ENCODE measurements at regions of chr6 and their contacts with region 1.

Region 1: DNA sequence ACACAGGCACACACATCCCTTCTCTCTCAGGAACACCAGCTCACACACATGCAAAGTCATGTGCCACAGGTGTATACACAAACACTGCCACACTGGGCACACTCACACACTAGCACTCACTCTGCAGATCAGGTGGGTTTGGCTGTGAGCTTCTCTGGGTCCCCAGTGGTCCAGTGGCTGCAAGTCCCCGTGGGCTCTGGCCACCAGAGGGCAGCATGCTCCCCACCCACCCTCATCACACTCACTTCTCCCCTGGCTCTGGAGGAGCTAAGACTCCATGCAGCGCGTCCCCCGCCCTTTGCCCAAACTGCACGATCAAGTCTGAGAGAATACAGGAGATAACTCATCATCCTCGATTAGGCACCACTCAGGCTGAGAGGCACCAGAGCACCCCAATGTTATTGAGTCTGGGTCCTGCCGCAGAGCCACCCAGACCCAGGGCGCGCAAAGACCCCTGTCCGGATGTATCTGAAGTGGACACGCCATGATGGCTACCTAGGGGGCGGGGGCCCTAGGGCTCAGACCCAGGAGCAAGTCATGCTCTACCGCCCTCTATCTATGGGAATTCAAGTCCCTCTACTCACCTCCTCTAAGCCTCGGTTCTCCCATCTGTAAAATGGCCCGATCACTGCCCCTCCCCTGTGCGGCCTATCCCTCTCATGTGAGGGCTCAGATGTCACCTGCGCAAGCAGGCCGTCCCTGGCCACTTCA is 90.5 kb downstream of the GRM4 start:
- DNase-seq: peak; percentile 92
- H3K4me3 ChIP-seq: no peak overlapping the region; a peak in 1 of 4 replicates
- H3K27ac ChIP-seq: no peak overlapping the region
- H3K4me1 ChIP-seq: peaks cover 0 to 10% of the 10 kb centered on the region in 2 experiments; a peak in 1 of 4 replicates
- H3K27me3 ChIP-seq: no peaks in the 10 kb centered on the region; the same call in none of the 2 replicates
- CTCF ChIP-seq: peak; percentile 84
- EP300 ChIP-seq: no peak
- RAD21 ChIP-seq: peak; percentile 73

Region 2: GRCh38 chr6:33994472-33995308 is 60.7 kb before region 1 on chr6:
- CTCF ChIA-PET with region 1: no interaction called
- POLR2A ChIA-PET with region 1: no interaction called
- DNase-seq: no peak
- H3K4me3 ChIP-seq: no peak overlapping the region
- H3K27ac ChIP-seq: no peak overlapping the region
- H3K4me1 ChIP-seq: no peaks in the 10 kb centered on the region; a peak in 2 of 4 replicates
- H3K27me3 ChIP-seq: 0 out of 2 replicates have a peak, but pooled peaks cover 5% of the 10 kb centered on the region
- CTCF ChIP-seq: no peak
- EP300 ChIP-seq: no peak
- RAD21 ChIP-seq: no peak

Region 3: DNA sequence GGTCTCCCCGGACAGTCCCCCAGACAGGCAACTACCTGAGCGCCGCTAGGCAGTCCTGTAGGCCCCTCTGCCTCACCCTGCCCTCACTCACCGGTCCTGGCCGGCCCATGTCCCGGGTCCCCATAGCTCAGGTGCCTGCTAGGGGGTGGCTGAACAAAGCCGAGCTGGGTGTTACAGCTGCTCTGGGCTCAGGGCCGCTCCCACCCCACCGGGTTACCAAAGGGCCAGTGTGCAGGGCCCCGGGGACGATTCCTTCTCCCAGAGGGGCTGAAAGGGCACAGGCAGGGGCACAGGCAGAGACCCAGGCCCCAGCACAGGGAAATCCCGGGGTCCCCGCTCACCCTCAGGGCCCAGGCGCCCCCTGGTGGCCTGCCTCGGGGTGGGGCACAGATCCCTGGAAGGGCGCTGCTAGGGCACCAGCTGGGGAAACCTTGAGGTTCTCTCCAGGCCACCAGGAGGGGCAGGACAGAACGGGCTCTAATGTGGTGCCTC is 27.9 kb before region 1 on chr6:
- CTCF ChIA-PET with region 1: interaction called, 53 read pairs
- POLR2A ChIA-PET with region 1: no interaction called
- DNase-seq: peak; percentile 88
- H3K4me3 ChIP-seq: no peak overlapping the region
- H3K27ac ChIP-seq: no peak overlapping the region
- H3K4me1 ChIP-seq: peaks cover 0 to 21% of the 10 kb centered on the region in 2 experiments; a peak in 1 of 4 replicates
- H3K27me3 ChIP-seq: no peaks in the 10 kb centered on the region; the same call in 1 of the 2 replicates
- CTCF ChIP-seq: peak; percentile 77
- EP300 ChIP-seq: no peak
- RAD21 ChIP-seq: peak; percentile 70

Region 4: GRCh38 chr6:34067814-34068213 is 12.4 kb after region 1 on chr6:
- CTCF ChIA-PET with region 1: interaction called, 38 read pairs
- POLR2A ChIA-PET with region 1: interaction called, 3 read pairs
- DNase-seq: no peak
- H3K4me3 ChIP-seq: no peak overlapping the region
- H3K27ac ChIP-seq: no peak overlapping the region
- H3K4me1 ChIP-seq: peaks cover 0 to 11% of the 10 kb centered on the region in 2 experiments; a peak in 1 of 4 replicates
- H3K27me3 ChIP-seq: peaks cover 8% of the 10 kb centered on the region
- CTCF ChIP-seq: no peak
- EP300 ChIP-seq: no peak
- RAD21 ChIP-seq: peak; percentile 27; the same call in 1 of the 2 replicates

Region 5: GRCh38 chr6:34103321-34103720 is 47.9 kb after region 1 on chr6:
- CTCF ChIA-PET with region 1: interaction called, 12 read pairs
- POLR2A ChIA-PET with region 1: no interaction called
- DNase-seq: peak; percentile 52
- H3K4me3 ChIP-seq: no peak overlapping the region
- H3K27ac ChIP-seq: no peak overlapping the region
- H3K4me1 ChIP-seq: peaks cover 0 to 4% of the 10 kb centered on the region in 2 experiments; a peak in 1 of 4 replicates
- H3K27me3 ChIP-seq: peaks cover 28% of the 10 kb centered on the region
- CTCF ChIP-seq: no peak
- EP300 ChIP-seq: no peak
- RAD21 ChIP-seq: no peak

Region 6: DNA sequence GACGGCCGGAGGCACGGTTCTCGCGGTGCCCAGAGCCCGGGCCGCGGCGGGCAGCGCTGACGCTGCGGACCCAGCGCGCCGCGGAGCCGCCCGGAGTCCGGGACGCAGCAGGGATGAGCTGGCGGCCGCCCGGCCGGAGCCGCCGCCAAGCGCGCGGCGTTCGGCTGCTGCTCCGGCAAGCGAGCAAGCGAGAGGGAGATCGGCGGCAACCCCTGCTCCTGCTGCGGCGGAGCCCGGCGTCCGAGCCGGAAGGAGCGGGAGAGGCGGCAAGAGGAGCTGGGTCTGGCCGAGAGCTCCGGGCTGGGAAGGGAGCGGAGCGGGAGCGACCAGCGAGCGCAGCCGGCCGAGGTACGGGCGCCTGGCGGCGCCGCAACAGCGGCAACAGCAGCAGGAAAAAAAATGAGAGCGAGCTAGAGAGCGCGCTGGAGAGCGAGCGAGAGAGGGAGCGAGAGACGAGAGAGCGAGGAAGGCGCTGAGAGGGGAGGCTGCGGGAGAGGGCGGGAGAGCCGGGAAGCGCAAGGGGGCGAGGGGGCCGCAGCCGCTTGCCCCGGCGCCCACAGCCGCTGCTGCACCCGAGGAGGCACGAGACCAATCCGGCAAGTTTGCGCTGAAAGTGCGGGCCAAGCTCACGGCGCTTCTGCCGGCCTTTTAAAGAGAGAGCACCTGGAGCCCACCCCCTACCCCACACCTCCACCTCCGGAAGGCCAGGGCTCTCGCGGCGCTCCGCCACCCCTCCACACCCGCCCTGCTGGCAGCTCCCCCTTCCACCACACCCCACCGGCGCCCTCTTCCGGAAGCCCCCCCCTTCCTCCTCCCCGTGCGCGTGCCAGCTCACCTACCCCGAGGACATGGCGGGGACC is 90.0 kb after region 1 on chr6:
- CTCF ChIA-PET with region 1: interaction called, 85 read pairs
- POLR2A ChIA-PET with region 1: no interaction called
- DNase-seq: peak; percentile 78
- H3K4me3 ChIP-seq: peak overlapping the region; percentile 42 to 56
- H3K27ac ChIP-seq: no peak overlapping the region
- H3K4me1 ChIP-seq: peaks cover 0 to 20% of the 10 kb centered on the region in 2 experiments; a peak in 2 of 4 replicates
- H3K27me3 ChIP-seq: peaks cover 67% of the 10 kb centered on the region
- CTCF ChIP-seq: no peak
- EP300 ChIP-seq: no peak
- RAD21 ChIP-seq: no peak